Breast epithelium (tissue), 4 donors: ENCODE measurements at regions of chr22 and their contacts with region 1.

Region 1: DNA sequence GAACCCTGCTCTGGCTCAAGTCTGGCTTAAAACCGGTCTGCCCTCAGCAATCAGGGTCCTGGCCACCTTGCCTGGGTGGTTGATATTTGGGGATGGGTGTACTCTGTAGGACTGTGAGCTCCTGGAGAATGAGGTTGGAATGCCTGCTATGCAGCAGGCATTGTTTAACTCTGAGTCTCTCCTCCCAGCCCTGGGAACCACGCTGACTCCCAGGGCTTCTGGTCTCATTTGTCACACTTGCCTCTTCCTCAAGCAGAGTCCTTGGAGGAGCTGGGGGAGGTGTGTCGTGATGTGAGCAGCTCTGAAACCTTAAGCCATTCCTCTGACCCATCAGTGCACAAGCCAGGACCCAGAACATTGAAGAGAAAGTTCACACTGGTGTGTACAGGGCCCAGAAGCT is 340.1 kb downstream of the MN1 start:
- DNase-seq: no peak
- H3K4me3 ChIP-seq: no peak overlapping the region
- H3K27ac ChIP-seq: no peak overlapping the region
- H3K4me1 ChIP-seq: no peaks in the 10 kb centered on the region
- H3K27me3 ChIP-seq: no peaks in the 10 kb centered on the region
- CTCF ChIP-seq: no peak
- POLR2A ChIP-seq: no peak

Region 2: GRCh38 chr22:27445881-27446280 is 15.6 kb before region 1 on chr22:
- intact Hi-C with region 1: loop called (anchors 1 kb)
- DNase-seq: no peak
- H3K4me3 ChIP-seq: no peak overlapping the region
- H3K27ac ChIP-seq: no peak overlapping the region
- H3K4me1 ChIP-seq: no peaks in the 10 kb centered on the region
- H3K27me3 ChIP-seq: no peaks in the 10 kb centered on the region
- CTCF ChIP-seq: no peak
- POLR2A ChIP-seq: no peak

Region 3: GRCh38 chr22:27514601-27515523 is 53.4 kb after region 1 on chr22:
- intact Hi-C with region 1: loop called (anchors 2 kb)
- DNase-seq: no peak
- H3K4me3 ChIP-seq: no peak overlapping the region
- H3K27ac ChIP-seq: peak overlapping the region in 1 of 2 donors; percentile 28
- H3K4me1 ChIP-seq: peaks cover 0 to 6% of the 10 kb centered on the region in 2 donors
- H3K27me3 ChIP-seq: no peaks in the 10 kb centered on the region
- CTCF ChIP-seq: no peak
- POLR2A ChIP-seq: no peak